PC-3 (cell line): ENCODE measurements at regions of chr5 and their contacts with region 1.

Region 1: GRCh38 chr5:148897842-148898241 is 71.4 kb downstream of the ADRB2 start:
- DNase-seq: no peak
- ATAC-seq: no peak
- H3K4me3 ChIP-seq: no peak overlapping the region
- H3K27ac ChIP-seq: no peak overlapping the region
- H3K4me1 ChIP-seq: no peaks in the 10 kb centered on the region
- H3K27me3 ChIP-seq: no peaks in the 10 kb centered on the region
- CTCF ChIP-seq: no peak

Region 2: GRCh38 chr5:148740966-148741742 is 156.7 kb before region 1 on chr5:
- CTCF ChIA-PET with region 1: no interaction called
- POLR2A ChIA-PET with region 1: no interaction called
- intact Hi-C with region 1: no loop called
- DNase-seq: peak; percentile 96
- ATAC-seq: peak; percentile 92
- H3K4me3 ChIP-seq: peak overlapping the region; percentile 4; the same call in 1 of the 2 replicates
- H3K27ac ChIP-seq: no peak overlapping the region
- H3K4me1 ChIP-seq: peaks cover 5% of the 10 kb centered on the region
- H3K27me3 ChIP-seq: no peaks in the 10 kb centered on the region
- CTCF ChIP-seq: peak; percentile 99

Region 3: DNA sequence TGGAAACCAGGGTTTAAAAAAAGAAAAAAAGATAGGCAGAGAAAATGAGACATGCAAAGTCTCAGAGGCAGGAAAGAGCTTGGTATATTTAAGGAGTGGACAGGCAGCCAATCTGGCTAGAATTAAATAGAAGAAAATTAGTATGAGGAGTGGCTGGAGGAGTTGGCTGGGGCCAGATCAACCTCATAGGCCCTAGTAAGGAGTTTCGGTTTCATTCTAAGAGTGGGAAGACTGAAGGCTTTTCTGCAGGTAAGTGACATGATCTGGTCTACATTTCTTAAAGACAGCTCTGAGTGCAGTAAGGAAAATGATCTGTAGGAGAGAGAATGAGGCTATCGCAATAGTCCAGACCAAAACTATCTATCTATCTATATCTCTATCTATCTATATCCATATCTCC is 44.0 kb before region 1 on chr5:
- CTCF ChIA-PET with region 1: no interaction called
- POLR2A ChIA-PET with region 1: no interaction called
- intact Hi-C with region 1: loop called (anchors 5 kb)
- DNase-seq: no peak
- ATAC-seq: no peak
- H3K4me3 ChIP-seq: no peak overlapping the region
- H3K27ac ChIP-seq: no peak overlapping the region
- H3K4me1 ChIP-seq: no peaks in the 10 kb centered on the region
- H3K27me3 ChIP-seq: no peaks in the 10 kb centered on the region
- CTCF ChIP-seq: no peak

Region 4: DNA sequence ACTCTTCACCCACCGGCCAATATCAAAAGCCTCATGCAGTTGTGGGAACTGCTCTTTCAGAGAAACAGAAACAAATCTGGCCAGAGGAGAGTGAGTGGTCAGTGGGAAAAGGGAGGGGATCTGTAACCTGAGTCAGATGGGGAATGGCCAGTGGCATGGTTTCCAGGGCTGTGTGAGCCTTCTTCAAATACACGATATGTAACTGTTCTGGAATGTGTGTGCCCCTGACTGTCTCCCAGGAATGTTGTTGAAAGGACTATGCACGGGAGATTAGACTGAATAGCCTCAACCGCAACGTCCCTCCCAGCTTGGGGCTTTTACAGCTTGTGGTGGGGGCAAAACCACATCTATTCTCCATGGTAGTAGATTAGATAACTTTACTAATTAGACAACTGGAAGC is 104.2 kb after region 1 on chr5:
- CTCF ChIA-PET with region 1: no interaction called
- POLR2A ChIA-PET with region 1: no interaction called
- intact Hi-C with region 1: no loop called
- DNase-seq: peak; percentile 100
- ATAC-seq: peak; percentile 84
- H3K4me3 ChIP-seq: peak overlapping the region; percentile 25
- H3K27ac ChIP-seq: peak overlapping the region; percentile 79
- H3K4me1 ChIP-seq: peaks cover 89% of the 10 kb centered on the region
- H3K27me3 ChIP-seq: no peaks in the 10 kb centered on the region
- CTCF ChIP-seq: no peak